ENCODE measurements at regions of chr2 and their contacts with region 1.

Region 1: DNA sequence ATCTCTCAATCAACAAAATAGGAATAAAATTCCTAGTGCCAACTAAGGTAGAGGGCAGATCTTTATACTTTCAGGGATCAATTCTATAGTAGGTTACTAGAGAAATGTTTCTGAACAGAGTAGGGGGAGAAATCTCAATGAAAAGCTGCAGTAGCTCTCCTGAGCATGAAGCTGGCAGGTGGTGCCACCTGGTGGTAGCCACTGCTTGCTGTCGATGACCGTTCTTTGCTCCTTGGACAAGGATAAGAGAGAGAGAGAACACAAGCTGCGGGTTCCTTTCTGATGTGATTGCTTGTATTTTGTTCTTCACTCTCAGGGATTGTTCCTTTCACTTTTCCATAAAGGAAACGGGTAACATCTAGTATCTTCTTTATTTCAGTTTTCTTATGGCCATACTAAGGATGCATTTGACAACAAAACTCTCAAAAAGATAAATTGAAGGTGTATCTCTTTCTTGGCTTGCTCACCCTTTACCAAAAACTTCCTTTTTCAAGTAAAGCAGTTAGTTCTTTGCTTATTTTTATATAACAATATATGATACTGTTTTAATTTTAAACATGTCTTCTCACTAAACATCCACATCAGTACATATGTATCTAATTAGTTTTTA is 18.6 kb upstream of the MRPL19 start:
- DNase-seq: peak; percentile 61
- ATAC-seq: peak; percentile 62
- H3K4me3 ChIP-seq: no peak overlapping the region
- H3K4me3 Mint-ChIP-seq: no peak overlapping the region
- H3K27ac ChIP-seq: no peak overlapping the region
- H3K27ac Mint-ChIP-seq: no peak overlapping the region
- H3K4me1 ChIP-seq: no peaks in the 10 kb centered on the region
- H3K4me1 Mint-ChIP-seq: peaks cover 2% of the 10 kb centered on the region
- H3K27me3 ChIP-seq: peaks cover 0 to 5% (median 2%) of the 10 kb centered on the region in 4 experiments
- H3K27me3 Mint-ChIP-seq: peaks cover 34% of the 10 kb centered on the region
- CTCF ChIP-seq: peak; percentile 98

Region 2: DNA sequence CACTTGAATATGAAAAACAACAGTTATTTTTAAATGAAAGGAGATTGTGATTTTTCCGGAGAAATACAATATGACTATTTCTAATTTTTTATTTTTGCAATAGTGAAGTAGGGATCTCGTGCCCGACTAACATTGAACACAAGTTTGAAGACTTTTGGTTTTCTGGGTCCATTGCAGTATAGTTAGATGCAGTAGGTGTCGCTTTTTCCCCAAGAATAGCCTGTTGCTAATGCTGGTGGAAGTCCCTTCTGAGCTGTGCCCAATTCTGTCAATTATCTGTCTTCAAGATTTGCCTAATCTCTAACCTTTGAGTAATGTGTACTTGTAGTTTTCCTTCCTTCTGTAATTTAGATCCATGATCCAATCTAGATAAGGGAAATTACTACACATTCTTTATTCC is 937.4 kb before region 1 on chr2:
- CTCF ChIA-PET with region 1: interaction called, 7 read pairs
- POLR2A ChIA-PET with region 1: no interaction called
- intact Hi-C with region 1: loop called (anchors 1 kb)
- DNase-seq: peak; percentile 61
- ATAC-seq: peak; percentile 49
- H3K4me3 ChIP-seq: no peak overlapping the region
- H3K4me3 Mint-ChIP-seq: no peak overlapping the region
- H3K27ac ChIP-seq: no peak overlapping the region
- H3K27ac Mint-ChIP-seq: no peak overlapping the region
- H3K4me1 ChIP-seq: no peaks in the 10 kb centered on the region
- H3K4me1 Mint-ChIP-seq: no peaks in the 10 kb centered on the region
- H3K27me3 ChIP-seq: no peaks in the 10 kb centered on the region
- H3K27me3 Mint-ChIP-seq: peaks cover 12% of the 10 kb centered on the region
- CTCF ChIP-seq: peak; percentile 74

Region 3: DNA sequence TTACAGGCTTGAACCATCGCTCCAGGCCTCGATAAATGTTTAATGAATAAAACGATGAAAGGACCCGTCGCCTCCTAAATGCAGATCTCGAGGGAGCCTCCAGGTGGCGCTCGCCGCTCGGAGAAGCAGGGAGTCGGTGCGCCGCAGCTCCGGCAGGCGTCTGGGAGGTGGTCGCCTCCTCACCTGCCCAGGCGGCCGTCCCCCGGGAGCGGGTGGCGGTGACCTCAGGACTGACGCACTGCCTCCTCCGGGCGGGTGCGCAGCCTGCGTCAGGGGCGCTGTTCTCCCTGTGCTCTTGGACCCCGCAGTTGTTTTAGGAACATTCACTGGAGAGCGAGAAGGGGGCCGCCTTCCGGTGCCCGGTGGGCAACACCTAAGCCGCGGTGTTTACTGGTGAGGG is 708.2 kb before region 1 on chr2:
- CTCF ChIA-PET with region 1: interaction called, 27 read pairs
- POLR2A ChIA-PET with region 1: no interaction called
- intact Hi-C with region 1: loop called (anchors 1 kb)
- DNase-seq: peak; percentile 79
- ATAC-seq: peak; percentile 88
- H3K4me3 ChIP-seq: peak overlapping the region in 1 of 5 experiments; percentile 21
- H3K4me3 Mint-ChIP-seq: peak overlapping the region; percentile 68
- H3K27ac ChIP-seq: no peak overlapping the region
- H3K27ac Mint-ChIP-seq: peak overlapping the region; percentile 15
- H3K4me1 ChIP-seq: peaks cover 3 to 7% of the 10 kb centered on the region in 2 donors
- H3K4me1 Mint-ChIP-seq: peaks cover 27% of the 10 kb centered on the region
- H3K27me3 ChIP-seq: peaks cover 0 to 6% (median 0%) of the 10 kb centered on the region in 4 experiments
- H3K27me3 Mint-ChIP-seq: peaks cover 18% of the 10 kb centered on the region
- CTCF ChIP-seq: peak; percentile 96

Region 4: DNA sequence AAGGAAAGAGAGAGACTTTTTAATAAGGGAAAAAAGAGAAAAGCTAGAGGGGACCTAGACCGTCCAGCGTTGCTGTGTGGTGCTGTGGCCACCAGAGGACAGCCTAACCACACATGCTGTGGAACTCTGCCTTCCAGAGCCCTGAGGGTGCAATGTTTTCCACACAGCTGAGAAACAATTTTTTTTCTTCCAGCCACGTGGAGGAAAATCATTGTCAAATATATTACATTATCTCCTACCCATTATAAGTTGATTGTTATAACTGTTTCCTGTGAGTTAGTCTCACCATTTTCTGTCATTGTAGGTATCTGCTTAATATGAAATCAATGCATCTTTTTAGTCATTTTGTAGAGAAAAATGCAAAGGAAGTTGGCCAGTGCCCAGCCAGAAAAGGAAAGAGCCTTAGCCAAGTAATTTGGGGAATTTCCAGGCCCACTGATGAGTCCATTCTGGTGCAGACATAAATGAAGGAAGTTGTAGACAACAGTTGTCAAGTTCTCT is 12.7 kb after region 1 on chr2:
- CTCF ChIA-PET with region 1: interaction called, 14 read pairs
- POLR2A ChIA-PET with region 1: no interaction called
- intact Hi-C with region 1: no loop called
- DNase-seq: peak; percentile 44
- ATAC-seq: peak; percentile 97
- H3K4me3 ChIP-seq: no peak overlapping the region
- H3K4me3 Mint-ChIP-seq: no peak overlapping the region
- H3K27ac ChIP-seq: no peak overlapping the region
- H3K27ac Mint-ChIP-seq: no peak overlapping the region
- H3K4me1 ChIP-seq: no peaks in the 10 kb centered on the region
- H3K4me1 Mint-ChIP-seq: no peaks in the 10 kb centered on the region
- H3K27me3 ChIP-seq: peaks cover 0 to 14% (median 2%) of the 10 kb centered on the region in 4 experiments
- H3K27me3 Mint-ChIP-seq: peaks cover 29% of the 10 kb centered on the region
- CTCF ChIP-seq: peak; percentile 99

Region 5: GRCh38 chr2:75790121-75790813 is 162.3 kb after region 1 on chr2:
- CTCF ChIA-PET with region 1: no interaction called
- POLR2A ChIA-PET with region 1: no interaction called
- intact Hi-C with region 1: no loop called
- DNase-seq: no peak
- ATAC-seq: no peak
- H3K4me3 ChIP-seq: no peak overlapping the region
- H3K4me3 Mint-ChIP-seq: no peak overlapping the region
- H3K27ac ChIP-seq: no peak overlapping the region
- H3K27ac Mint-ChIP-seq: no peak overlapping the region
- H3K4me1 ChIP-seq: no peaks in the 10 kb centered on the region
- H3K4me1 Mint-ChIP-seq: no peaks in the 10 kb centered on the region
- H3K27me3 ChIP-seq: peaks cover 0 to 3% (median 0%) of the 10 kb centered on the region in 4 experiments
- H3K27me3 Mint-ChIP-seq: peaks cover 13% of the 10 kb centered on the region
- CTCF ChIP-seq: no peak

Measured in B cell (primary cell).